ENCODE measurements at regions of chr4 and their contacts with region 1.

Region 1: GRCh38 chr4:77248810-77249209 is 91.8 kb downstream of the CCNG2 start:
- DNase-seq: no peak
- ATAC-seq: peak in 1 of 4 donors; percentile 63
- H3K4me3 ChIP-seq: no peak overlapping the region
- H3K27ac ChIP-seq: no peak overlapping the region
- H3K4me1 ChIP-seq: no peaks in the 10 kb centered on the region
- H3K27me3 ChIP-seq: no peaks in the 10 kb centered on the region
- CTCF ChIP-seq: no peak
- POLR2A ChIP-seq: no peak

Region 2: DNA sequence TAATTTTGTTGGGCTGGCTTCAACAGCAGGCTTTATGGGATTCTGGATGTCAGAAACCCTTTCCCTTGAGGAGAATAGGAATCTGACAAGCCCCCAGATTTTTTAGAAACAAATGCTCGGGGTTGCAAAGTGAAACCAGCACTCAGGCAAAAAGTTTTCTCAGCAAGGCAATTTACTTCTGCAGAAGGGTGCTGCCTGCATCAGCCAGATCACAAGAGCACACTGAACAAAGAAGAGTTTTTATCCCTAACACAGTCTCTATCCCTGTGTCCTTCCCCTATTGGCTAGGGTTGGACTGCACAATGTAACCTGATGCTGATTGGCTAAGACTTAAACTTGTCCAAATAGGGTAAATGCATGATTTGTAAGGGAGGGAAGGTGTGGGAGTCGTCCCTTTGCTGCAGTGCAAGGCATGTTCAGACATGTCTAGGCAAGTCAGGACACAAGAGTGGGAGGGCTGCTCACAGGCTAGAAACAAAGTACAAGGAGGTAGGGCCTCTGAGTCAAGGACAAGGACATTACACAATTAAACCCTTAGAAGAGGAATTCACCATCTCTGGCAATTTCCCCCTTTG is 84.0 kb after region 1 on chr4:
- intact Hi-C with region 1: no loop called
- DNase-seq: no peak
- ATAC-seq: no peak
- H3K4me3 ChIP-seq: no peak overlapping the region
- H3K27ac ChIP-seq: no peak overlapping the region
- H3K4me1 ChIP-seq: no peaks in the 10 kb centered on the region
- H3K27me3 ChIP-seq: no peaks in the 10 kb centered on the region
- CTCF ChIP-seq: no peak
- POLR2A ChIP-seq: no peak

Region 3: DNA sequence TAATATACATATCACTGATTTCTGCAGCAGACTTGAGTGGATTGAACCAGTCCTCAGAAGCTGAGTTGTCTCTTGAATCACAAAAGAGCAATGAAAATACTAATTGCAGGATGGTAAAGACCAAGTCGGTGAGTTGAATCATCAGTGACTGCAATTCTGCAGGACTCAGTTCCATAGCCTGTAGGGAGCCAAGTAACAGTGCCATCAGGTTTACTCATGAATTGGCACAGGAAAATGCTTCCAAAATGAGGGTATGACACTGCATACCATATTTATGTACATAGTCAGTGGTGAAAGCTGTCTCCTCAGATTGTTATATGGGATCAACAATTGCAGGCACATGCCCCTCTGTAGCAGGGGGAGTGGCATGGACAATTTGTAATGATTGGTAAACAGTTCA is 101.0 kb after region 1 on chr4:
- intact Hi-C with region 1: loop called in 1 of 2 experiments (anchors 5 kb)
- DNase-seq: no peak
- ATAC-seq: no peak
- H3K4me3 ChIP-seq: no peak overlapping the region
- H3K27ac ChIP-seq: no peak overlapping the region
- H3K4me1 ChIP-seq: no peaks in the 10 kb centered on the region
- H3K27me3 ChIP-seq: no peaks in the 10 kb centered on the region
- CTCF ChIP-seq: no peak
- POLR2A ChIP-seq: no peak

Measured in right lobe of liver (tissue), 6 donors.